ENCODE measurements at regions of chr22 and their contacts with region 1.

Region 1: DNA sequence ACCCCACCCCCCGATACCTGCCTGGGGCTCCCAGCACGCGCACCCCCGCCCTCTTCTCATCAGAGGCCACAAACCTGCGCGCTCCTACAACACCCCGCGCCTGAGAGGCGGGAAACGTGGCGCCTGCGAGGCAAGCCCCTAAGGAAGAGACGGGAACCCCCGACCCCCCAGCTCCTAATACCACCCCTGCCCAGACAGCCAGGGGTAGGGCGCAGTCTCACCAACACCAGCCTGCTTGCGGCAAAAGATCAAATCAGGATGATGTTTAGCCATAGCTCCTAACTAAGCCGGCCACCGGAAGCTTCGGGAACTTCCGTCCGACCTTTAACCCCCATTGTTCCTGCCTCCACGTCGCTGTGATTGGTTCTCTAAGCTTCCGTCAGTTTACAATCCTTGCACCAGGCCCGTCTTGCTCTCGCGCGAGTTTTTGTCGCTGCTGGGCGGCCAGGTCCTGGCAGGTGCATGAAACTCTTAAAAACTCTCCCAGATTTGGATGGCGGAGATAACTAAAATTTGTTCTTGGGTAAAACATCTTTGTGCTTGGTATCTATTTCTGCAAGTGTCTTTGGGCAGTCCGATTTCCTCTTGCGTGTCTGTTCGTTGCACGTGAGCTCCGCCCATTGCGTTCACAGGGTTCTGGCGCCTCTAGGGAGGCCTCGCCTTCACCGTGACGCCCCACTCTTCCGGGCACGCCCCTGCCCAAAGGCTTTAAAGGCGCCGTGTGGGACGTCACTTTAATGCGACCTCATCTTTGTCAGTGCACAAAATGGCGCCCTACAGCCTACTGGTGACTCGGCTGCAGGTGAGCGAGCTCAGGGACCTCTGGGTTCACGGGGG is at the starts of genes ACO2 and PHF5A:
- DNase-seq: peak; percentile 98
- ATAC-seq: peak; percentile 95
- H3K4me3 Mint-ChIP-seq: peak within 1 kb of the TSS; percentile 87
- H3K27ac Mint-ChIP-seq: peak within 1 kb of the TSS; percentile 98
- H3K4me1 Mint-ChIP-seq: peaks cover 56% of the 10 kb centered on the region
- H3K27me3 Mint-ChIP-seq: no peaks in the 10 kb centered on the region
- CTCF ChIP-seq: no peak
- total RNA-seq, gene ACO2: 96.5 to 97.7 TPM
- total RNA-seq, gene PHF5A: 65.2 to 70.4 TPM

Region 2: DNA sequence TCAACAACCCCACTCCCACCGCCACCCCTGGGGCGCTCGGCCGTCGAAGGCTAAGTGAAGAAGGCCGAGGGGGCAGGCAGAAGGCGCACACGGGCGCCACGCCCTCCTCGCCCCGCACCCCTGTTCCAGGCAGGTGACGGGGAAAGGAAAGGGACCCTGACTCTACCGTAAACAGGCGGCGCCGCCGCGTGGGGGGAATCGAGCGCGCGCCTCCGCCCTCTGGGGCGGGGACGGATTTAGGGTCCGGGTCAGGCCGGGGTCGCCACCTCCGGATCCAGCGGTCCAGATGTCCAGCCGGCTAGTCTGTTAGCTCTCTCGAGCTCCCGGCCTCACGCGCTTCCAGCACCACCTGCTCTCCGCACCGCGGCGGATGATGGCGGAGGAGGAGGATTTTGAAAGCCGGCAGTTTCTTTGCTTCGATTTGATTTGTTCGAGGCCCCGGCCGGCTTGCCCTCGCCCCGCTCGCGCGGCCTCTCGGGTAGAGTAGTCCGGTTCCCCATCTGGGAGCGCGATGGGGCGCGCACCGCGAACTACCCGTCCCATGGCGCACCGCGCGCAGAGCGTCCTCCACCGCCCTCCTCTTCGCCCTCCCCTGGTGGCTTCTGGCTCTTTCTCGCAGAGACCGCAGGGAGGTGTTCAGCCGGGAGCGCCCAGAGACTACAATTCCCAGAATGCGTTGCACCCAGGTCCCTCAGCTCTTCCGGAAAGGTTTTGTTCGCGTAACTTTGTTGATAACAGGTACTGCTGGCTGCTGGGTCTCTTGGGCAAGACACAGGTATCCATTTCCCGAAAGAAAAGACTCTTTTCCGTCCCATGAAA is 182.6 kb before region 1 on chr22 and contains the start of gene RANGAP1:
- CTCF ChIA-PET with region 1: no interaction called
- POLR2A ChIA-PET with region 1: interaction called, 11 read pairs
- intact Hi-C with region 1: no loop called
- DNase-seq: peak; percentile 99
- ATAC-seq: peak; percentile 94
- H3K4me3 Mint-ChIP-seq: peak within 1 kb of the TSS; percentile 94
- H3K27ac Mint-ChIP-seq: peak within 1 kb of the TSS; percentile 99
- H3K4me1 Mint-ChIP-seq: peaks cover 25% of the 10 kb centered on the region
- H3K27me3 Mint-ChIP-seq: no peaks in the 10 kb centered on the region
- CTCF ChIP-seq: no peak
- total RNA-seq, gene RANGAP1: 150 to 151 TPM

Region 3: GRCh38 chr22:41381329-41382097 is 87.1 kb before region 1 on chr22 and contains the start of gene TEF:
- CTCF ChIA-PET with region 1: no interaction called
- POLR2A ChIA-PET with region 1: interaction called, 20 read pairs
- intact Hi-C with region 1: no loop called
- DNase-seq: peak; percentile 99
- ATAC-seq: peak; percentile 90
- H3K4me3 Mint-ChIP-seq: peak within 1 kb of the TSS; percentile 85
- H3K27ac Mint-ChIP-seq: peak within 1 kb of the TSS; percentile 96
- H3K4me1 Mint-ChIP-seq: peaks cover 16% of the 10 kb centered on the region
- H3K27me3 Mint-ChIP-seq: no peaks in the 10 kb centered on the region
- CTCF ChIP-seq: no peak
- total RNA-seq, gene TEF: 1.4 to 2.0 TPM

Region 4: DNA sequence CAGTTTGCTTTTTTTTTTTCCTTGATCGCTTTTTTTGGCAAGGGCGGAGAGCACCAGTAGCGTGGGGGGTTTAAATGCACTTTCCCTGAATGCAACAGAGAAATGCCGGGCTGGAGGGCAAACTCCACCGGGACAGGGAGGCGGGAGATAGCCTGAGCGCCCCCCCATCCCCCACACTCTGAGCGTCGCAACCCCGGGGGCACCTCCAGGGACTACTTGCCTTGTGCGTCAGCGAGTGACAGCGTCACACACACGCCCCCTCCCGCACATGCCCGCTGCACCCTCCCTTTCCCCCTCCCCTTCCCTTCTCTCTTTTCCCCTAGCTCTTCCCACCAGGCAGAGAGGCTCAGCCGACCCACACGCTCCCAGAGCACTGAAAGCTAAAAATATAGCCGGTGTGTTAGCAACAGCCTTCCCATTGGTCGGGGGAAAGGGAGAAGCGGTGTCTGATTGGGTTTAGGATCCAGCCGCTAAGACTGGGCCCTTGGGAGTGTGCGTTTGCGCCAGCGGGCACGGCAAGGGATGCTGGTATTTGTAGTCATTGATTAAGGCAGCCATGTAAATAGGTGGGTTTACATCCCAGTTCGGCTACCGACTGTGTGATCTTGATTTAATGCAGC is 20.3 kb before region 1 on chr22:
- CTCF ChIA-PET with region 1: interaction called, 9 read pairs
- POLR2A ChIA-PET with region 1: interaction called, 238 read pairs
- intact Hi-C with region 1: loop called (anchors 1 kb)
- DNase-seq: peak; percentile 95
- ATAC-seq: peak; percentile 67
- H3K4me3 Mint-ChIP-seq: peak overlapping the region; percentile 90
- H3K27ac Mint-ChIP-seq: peak overlapping the region; percentile 99
- H3K4me1 Mint-ChIP-seq: peaks cover 10% of the 10 kb centered on the region
- H3K27me3 Mint-ChIP-seq: no peaks in the 10 kb centered on the region
- CTCF ChIP-seq: no peak

Region 5: GRCh38 chr22:41458161-41458728 is 10.4 kb before region 1 on chr22:
- CTCF ChIA-PET with region 1: interaction called, 4 read pairs
- POLR2A ChIA-PET with region 1: interaction called, 238 read pairs
- intact Hi-C with region 1: no loop called
- DNase-seq: no peak
- ATAC-seq: no peak
- H3K4me3 Mint-ChIP-seq: no peak overlapping the region
- H3K27ac Mint-ChIP-seq: peak overlapping the region; percentile 54
- H3K4me1 Mint-ChIP-seq: peaks cover 6% of the 10 kb centered on the region
- H3K27me3 Mint-ChIP-seq: no peaks in the 10 kb centered on the region
- CTCF ChIP-seq: no peak

Region 6: GRCh38 chr22:41479671-41480396 is 11.2 kb after region 1 on chr22:
- CTCF ChIA-PET with region 1: interaction called, 3 read pairs
- POLR2A ChIA-PET with region 1: interaction called, 25 read pairs
- intact Hi-C with region 1: no loop called
- DNase-seq: no peak
- ATAC-seq: no peak
- H3K4me3 Mint-ChIP-seq: no peak overlapping the region
- H3K27ac Mint-ChIP-seq: peak overlapping the region; percentile 25
- H3K4me1 Mint-ChIP-seq: peaks cover 39% of the 10 kb centered on the region
- H3K27me3 Mint-ChIP-seq: no peaks in the 10 kb centered on the region
- CTCF ChIP-seq: no peak